T-cell (primary cell): ENCODE measurements at regions of chr3 and their contacts with region 1.

Region 1: DNA sequence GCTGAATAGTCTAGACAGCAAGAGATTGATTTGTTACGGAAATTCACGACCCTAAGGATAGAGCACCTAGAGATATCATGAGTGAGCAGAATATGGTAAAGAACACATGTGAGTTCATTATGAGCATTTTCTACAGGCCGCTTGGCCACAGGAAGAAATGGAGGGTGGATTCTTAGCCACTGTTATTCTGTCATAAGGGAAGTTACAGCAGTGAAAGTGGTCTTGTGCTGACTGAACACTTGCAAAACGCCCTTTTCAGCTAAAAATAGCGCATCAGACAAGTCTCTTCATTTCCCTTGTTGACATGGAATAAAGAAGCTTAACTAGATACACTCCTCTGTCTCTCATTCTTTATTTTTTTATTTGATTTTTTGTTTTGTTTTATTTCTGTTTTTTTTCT is 19.8 kb downstream of the DGKG start:
- DNase-seq: no peak
- ATAC-seq: no peak
- H3K4me3 ChIP-seq: no peak overlapping the region
- H3K4me3 Mint-ChIP-seq: no peak overlapping the region
- H3K27ac ChIP-seq: no peak overlapping the region
- H3K27ac Mint-ChIP-seq: no peak overlapping the region
- H3K4me1 ChIP-seq: peaks cover 0 to 2% of the 10 kb centered on the region in 2 experiments
- H3K4me1 Mint-ChIP-seq: peaks cover 4 to 10% (median 10%) of the 10 kb centered on the region in 3 donors
- H3K27me3 ChIP-seq: peaks cover 0 to 3% of the 10 kb centered on the region in 2 experiments
- H3K27me3 Mint-ChIP-seq: peaks cover 4% of the 10 kb centered on the region in 2 donors

Region 2: GRCh38 chr3:186327912-186328487 is 14.2 kb before region 1 on chr3:
- CTCF ChIA-PET with region 1: interaction called in 1 of 2 experiments, 14 read pairs
- POLR2A ChIA-PET with region 1: interaction called in 1 of 2 experiments, 3 read pairs
- DNase-seq: no peak
- ATAC-seq: no peak
- H3K4me3 ChIP-seq: no peak overlapping the region
- H3K4me3 Mint-ChIP-seq: no peak overlapping the region
- H3K27ac ChIP-seq: no peak overlapping the region
- H3K27ac Mint-ChIP-seq: no peak overlapping the region
- H3K4me1 ChIP-seq: no peaks in the 10 kb centered on the region
- H3K4me1 Mint-ChIP-seq: no peaks in the 10 kb centered on the region
- H3K27me3 ChIP-seq: peaks cover 0 to 3% of the 10 kb centered on the region in 2 experiments
- H3K27me3 Mint-ChIP-seq: peaks cover 2 to 6% of the 10 kb centered on the region in 2 donors

Region 3: GRCh38 chr3:186354100-186354499 is 11.9 kb after region 1 on chr3:
- CTCF ChIA-PET with region 1: no interaction called
- POLR2A ChIA-PET with region 1: interaction called in 1 of 2 experiments, 11 read pairs
- DNase-seq: no peak
- ATAC-seq: no peak
- H3K4me3 ChIP-seq: no peak overlapping the region
- H3K4me3 Mint-ChIP-seq: no peak overlapping the region
- H3K27ac ChIP-seq: no peak overlapping the region
- H3K27ac Mint-ChIP-seq: no peak overlapping the region
- H3K4me1 ChIP-seq: no peaks in the 10 kb centered on the region
- H3K4me1 Mint-ChIP-seq: no peaks in the 10 kb centered on the region
- H3K27me3 ChIP-seq: peaks cover 0 to 2% of the 10 kb centered on the region in 2 experiments
- H3K27me3 Mint-ChIP-seq: peaks cover 17 to 25% of the 10 kb centered on the region in 2 donors

Region 4: GRCh38 chr3:186365202-186365974 is 23.2 kb after region 1 on chr3:
- CTCF ChIA-PET with region 1: no interaction called
- POLR2A ChIA-PET with region 1: no interaction called
- DNase-seq: no peak
- ATAC-seq: no peak
- H3K4me3 ChIP-seq: no peak overlapping the region
- H3K4me3 Mint-ChIP-seq: no peak overlapping the region
- H3K27ac ChIP-seq: no peak overlapping the region
- H3K27ac Mint-ChIP-seq: no peak overlapping the region
- H3K4me1 ChIP-seq: peaks cover 2 to 14% of the 10 kb centered on the region in 2 experiments
- H3K4me1 Mint-ChIP-seq: peaks cover 6 to 13% (median 8%) of the 10 kb centered on the region in 3 donors
- H3K27me3 ChIP-seq: peaks cover 11 to 52% of the 10 kb centered on the region in 2 experiments
- H3K27me3 Mint-ChIP-seq: peaks cover 41 to 45% of the 10 kb centered on the region in 2 donors